ENCODE measurements at regions of chr1 and their contacts with region 1.

Region 1: DNA sequence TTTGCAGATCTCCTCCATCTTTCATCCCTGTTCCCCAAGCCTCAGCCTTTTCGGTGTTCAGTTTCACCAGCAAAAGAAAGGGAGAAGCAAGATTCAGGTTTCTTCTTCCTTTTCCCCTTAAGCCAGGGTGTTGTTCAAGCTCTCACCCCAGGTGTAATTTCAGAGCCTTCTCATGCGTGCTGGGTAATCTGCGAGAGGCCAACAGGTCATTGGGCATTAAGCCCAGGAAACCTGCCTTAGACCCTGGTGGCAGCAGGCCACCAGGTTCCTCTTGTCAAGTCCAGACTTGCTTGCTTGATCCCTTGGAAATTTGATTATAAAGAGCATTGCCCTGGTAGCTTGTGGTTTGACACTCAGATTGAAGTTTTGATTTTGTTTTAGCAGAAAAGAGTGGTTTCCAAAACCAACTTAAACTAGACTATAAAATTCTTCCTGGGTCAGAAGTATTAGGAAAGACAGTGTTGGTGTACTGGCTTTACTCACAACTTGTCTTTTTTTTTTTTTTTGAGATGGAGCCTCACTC is 6.9 kb downstream of the AKR1A1 start:
- DNase-seq: no peak
- H3K4me3 ChIP-seq: no peak overlapping the region
- H3K27ac ChIP-seq: peak overlapping the region; percentile 19; the same call in 1 of the 2 replicates
- H3K4me1 ChIP-seq: peaks cover 0 to 1% (median 0%) of the 10 kb centered on the region in 4 experiments; a peak in 3 of 7 replicates
- H3K27me3 ChIP-seq: no peaks in the 10 kb centered on the region
- CTCF ChIP-seq: no peak
- EP300 ChIP-seq: no peak
- POLR2A ChIP-seq: no peak
- RAD21 ChIP-seq: no peak

Region 2: DNA sequence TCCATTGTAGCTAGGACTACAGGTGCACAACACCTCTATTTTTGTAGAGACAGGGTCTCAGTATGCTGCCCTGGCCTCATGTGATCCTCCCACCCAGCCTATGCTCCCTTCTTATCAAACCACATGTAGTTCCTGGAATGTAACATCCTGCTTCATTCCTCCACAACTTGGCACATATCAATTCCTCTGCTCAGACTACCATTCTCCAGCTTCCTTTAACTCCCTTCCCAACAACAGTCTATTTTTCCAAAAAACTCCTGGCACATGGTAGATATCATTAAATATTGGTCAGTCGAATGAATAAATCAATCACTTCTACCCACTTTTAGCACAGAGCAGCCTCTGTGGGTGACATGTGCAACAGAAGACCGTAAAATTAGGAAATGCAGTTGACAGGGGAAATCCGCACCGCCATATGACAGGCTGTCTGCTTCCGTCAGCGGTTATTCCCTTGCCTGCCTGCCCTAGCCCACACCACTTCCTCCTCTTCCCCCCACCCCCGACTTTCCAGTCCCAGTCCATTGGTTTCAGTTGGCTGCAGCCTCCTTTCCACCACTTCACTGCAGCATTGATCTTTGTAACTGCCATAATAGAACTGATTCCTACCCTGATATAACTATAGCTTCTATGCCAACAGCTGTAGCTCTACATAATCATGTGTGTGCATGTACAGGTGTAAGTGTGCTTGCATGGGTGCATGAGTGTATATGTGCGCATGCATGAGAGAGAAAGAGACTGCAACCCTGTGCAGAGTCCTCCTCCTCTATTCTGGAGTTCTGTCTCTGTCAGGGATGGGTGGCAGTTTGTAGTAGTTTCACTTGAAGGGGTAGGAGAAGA is 13.7 kb before region 1 on chr1:
- CTCF ChIA-PET with region 1: interaction called, 5 read pairs
- POLR2A ChIA-PET with region 1: interaction called, 14 read pairs
- DNase-seq: no peak
- H3K4me3 ChIP-seq: no peak overlapping the region
- H3K27ac ChIP-seq: no peak overlapping the region
- H3K4me1 ChIP-seq: peaks cover 0 to 5% (median 2%) of the 10 kb centered on the region in 4 experiments; a peak in 4 of 7 replicates
- H3K27me3 ChIP-seq: no peaks in the 10 kb centered on the region
- CTCF ChIP-seq: no peak
- EP300 ChIP-seq: no peak
- POLR2A ChIP-seq: no peak
- RAD21 ChIP-seq: no peak

Region 3: GRCh38 chr1:45704637-45705036 is 147.2 kb after region 1 on chr1:
- CTCF ChIA-PET with region 1: no interaction called
- POLR2A ChIA-PET with region 1: no interaction called
- DNase-seq: no peak
- H3K4me3 ChIP-seq: no peak overlapping the region
- H3K27ac ChIP-seq: no peak overlapping the region
- H3K4me1 ChIP-seq: no peaks in the 10 kb centered on the region
- H3K27me3 ChIP-seq: no peaks in the 10 kb centered on the region
- CTCF ChIP-seq: no peak
- EP300 ChIP-seq: no peak
- POLR2A ChIP-seq: no peak
- RAD21 ChIP-seq: no peak